Activated CD4-positive, alpha-beta T cell treated with anti-CD3 and anti-CD28 coated beads, Interleukin-2, amount 10 ng/mL, durations not matched to agents 24 days and 14 days (primary cell): ENCODE measurements at regions of chr17 and their contacts with region 1.

Region 1: DNA sequence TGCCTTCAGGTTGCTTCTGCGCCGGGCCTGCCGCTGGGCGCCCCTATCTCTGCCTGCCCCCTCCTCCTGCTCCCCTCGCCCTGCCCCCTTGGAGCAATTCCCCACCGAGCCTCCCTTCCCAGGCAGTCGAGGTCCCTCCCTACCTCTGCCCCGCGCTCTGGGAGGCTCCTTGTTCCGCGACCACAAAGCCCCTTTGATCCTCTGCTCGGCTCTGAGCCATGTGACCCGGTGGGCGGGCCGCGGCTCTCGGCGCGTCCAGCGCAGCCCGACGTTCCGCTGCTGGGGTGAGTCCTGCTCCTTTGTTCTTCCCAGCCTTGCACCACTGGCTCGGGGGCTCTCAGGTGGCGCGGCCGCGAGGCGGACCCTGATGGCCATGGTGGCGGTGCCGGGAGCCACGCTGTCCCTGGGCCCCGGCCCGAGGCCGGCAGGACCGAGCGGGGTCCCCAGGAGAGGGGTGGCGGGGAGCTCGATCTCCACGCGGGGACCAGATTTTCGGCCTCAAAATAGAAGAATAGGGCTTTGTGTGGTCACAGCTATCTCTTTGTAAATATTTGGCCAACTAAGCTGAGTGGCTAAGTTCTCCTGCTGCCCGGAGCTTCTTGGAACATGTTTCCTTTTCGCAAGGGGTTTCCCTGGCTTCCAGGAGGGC is 310.6 kb downstream of the SEC14L1 start:
- DNase-seq: peak; percentile 94
- H3K4me3 Mint-ChIP-seq: peak overlapping the region; percentile 97
- H3K27ac Mint-ChIP-seq: peak overlapping the region; percentile 96
- H3K4me1 Mint-ChIP-seq: peaks cover 62% of the 10 kb centered on the region
- H3K27me3 Mint-ChIP-seq: no peaks in the 10 kb centered on the region

Region 2: GRCh38 chr17:77465358-77466041 is 14.1 kb after region 1 on chr17:
- intact Hi-C with region 1: loop called (anchors 1 kb)
- DNase-seq: peak; percentile 93
- H3K4me3 Mint-ChIP-seq: peak overlapping the region; percentile 77
- H3K27ac Mint-ChIP-seq: peak overlapping the region; percentile 91
- H3K4me1 Mint-ChIP-seq: peaks cover 71% of the 10 kb centered on the region
- H3K27me3 Mint-ChIP-seq: no peaks in the 10 kb centered on the region